ENCODE measurements at regions of chr15 and their contacts with region 1.

Region 1: GRCh38 chr15:91338766-91339165 is 238.7 kb downstream of the SV2B start:
- DNase-seq: peak in 1 of 35 experiments; percentile 13
- ATAC-seq: no peak
- H3K4me3 ChIP-seq: no peak overlapping the region
- H3K4me3 Mint-ChIP-seq: no peak overlapping the region
- H3K27ac ChIP-seq: no peak overlapping the region
- H3K27ac Mint-ChIP-seq: no peak overlapping the region
- H3K4me1 ChIP-seq: peaks cover 13 to 23% of the 10 kb centered on the region in 2 experiments
- H3K4me1 Mint-ChIP-seq: peaks cover 31 to 50% (median 45%) of the 10 kb centered on the region in 3 donors
- H3K27me3 ChIP-seq: peaks cover 0 to 5% of the 10 kb centered on the region in 2 experiments
- H3K27me3 Mint-ChIP-seq: peaks cover 3 to 4% of the 10 kb centered on the region in 2 donors

Region 2: GRCh38 chr15:91807122-91807521 is 468.4 kb after region 1 on chr15:
- CTCF ChIA-PET with region 1: no interaction called
- POLR2A ChIA-PET with region 1: interaction called in 1 of 2 experiments, 11 read pairs
- DNase-seq: no peak
- ATAC-seq: no peak
- H3K4me3 ChIP-seq: no peak overlapping the region
- H3K4me3 Mint-ChIP-seq: no peak overlapping the region
- H3K27ac ChIP-seq: no peak overlapping the region
- H3K27ac Mint-ChIP-seq: no peak overlapping the region
- H3K4me1 ChIP-seq: no peaks in the 10 kb centered on the region
- H3K4me1 Mint-ChIP-seq: no peaks in the 10 kb centered on the region
- H3K27me3 ChIP-seq: peaks cover 0 to 11% of the 10 kb centered on the region in 2 experiments
- H3K27me3 Mint-ChIP-seq: peaks cover 18% of the 10 kb centered on the region in 2 donors

Region 3: DNA sequence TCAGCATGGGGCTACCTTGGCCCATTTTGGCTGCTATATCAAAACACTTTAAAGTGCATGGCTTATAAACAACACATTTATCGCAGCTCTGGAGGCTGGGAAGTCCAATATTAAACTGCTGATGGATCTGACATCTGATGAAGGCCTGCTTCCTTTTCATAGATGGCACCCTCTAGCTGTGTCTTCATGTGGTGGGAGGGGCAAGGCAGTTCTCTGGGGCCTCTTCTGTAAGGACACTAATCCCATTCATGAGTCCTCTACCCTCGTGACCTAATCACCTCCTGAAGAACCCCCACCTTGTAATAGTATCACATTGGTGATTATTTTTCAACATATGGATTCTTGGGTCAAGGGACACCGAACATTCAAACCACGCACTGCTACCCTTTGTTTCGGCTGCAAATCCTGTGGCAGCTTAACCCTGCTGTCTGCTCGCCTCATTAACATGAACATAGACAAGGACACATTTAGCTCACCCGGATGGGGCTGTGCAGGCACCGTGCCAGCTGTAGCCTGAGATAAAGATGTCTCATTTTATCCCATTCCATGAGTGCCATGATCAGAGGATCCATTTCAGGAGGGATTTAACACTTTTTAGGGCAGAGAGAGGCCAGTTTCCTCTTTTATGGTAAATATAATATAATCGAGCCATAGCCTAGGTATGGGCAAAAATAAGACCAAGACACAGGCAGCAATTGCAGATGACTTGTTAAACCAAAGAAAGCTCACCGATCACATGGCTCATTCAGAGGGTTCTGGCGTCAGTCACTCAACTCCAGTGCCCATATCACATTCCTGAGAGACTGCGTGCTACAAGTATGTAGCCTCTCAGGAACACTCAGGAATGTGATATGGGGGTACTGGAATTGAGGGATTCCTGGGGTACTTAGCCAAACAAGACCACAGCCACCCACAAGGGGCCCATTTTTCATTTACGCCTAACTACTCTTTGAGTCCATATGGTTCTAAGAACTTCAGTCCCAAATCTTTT is 803.8 kb after region 1 on chr15:
- CTCF ChIA-PET with region 1: no interaction called
- POLR2A ChIA-PET with region 1: no interaction called
- DNase-seq: no peak
- ATAC-seq: no peak
- H3K4me3 ChIP-seq: no peak overlapping the region
- H3K4me3 Mint-ChIP-seq: no peak overlapping the region
- H3K27ac ChIP-seq: no peak overlapping the region
- H3K27ac Mint-ChIP-seq: no peak overlapping the region
- H3K4me1 ChIP-seq: no peaks in the 10 kb centered on the region
- H3K4me1 Mint-ChIP-seq: no peaks in the 10 kb centered on the region
- H3K27me3 ChIP-seq: no peaks in the 10 kb centered on the region
- H3K27me3 Mint-ChIP-seq: no peaks in the 10 kb centered on the region

Measured in T-cell (primary cell).